ENCODE measurements at regions of chr4 and their contacts with region 1.

Region 1: GRCh38 chr4:180828440-180829018 is 1414.7 kb upstream of the TENM3 start:
- DNase-seq: peak; percentile 52
- H3K4me3 ChIP-seq: peak overlapping the region in 1 of 3 experiments; percentile 18
- H3K27ac ChIP-seq: peak overlapping the region; percentile 68
- H3K4me1 ChIP-seq: peaks cover 16% of the 10 kb centered on the region
- H3K27me3 ChIP-seq: no peaks in the 10 kb centered on the region
- CTCF ChIP-seq: peak; percentile 76 to 79

Region 2: DNA sequence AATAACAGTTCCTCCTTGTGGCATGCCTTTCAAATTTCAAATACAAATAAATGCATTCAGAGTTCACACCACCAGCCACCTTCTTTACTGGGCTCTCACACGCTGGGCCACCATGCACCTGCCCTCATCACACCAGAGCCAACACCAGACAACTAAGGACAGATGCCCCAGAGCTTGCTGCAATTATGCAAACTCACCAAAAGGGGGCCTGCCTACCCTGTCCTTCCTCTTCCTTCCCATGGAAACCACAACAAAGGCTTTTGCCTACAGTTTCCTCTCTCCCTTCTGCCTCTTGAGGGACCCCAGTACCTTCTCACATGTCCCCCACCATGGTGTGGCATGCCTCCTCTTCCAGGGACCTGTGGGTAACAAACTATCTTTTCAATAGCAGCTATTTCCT is 80.8 kb after region 1 on chr4:
- CTCF ChIA-PET with region 1: no interaction called
- dilution Hi-C with region 1: no loop called
- in situ Hi-C with region 1: no loop called
- intact Hi-C with region 1: loop called (anchors 2 kb)
- DNase-seq: peak; percentile 40
- H3K4me3 ChIP-seq: no peak overlapping the region
- H3K27ac ChIP-seq: no peak overlapping the region
- H3K4me1 ChIP-seq: peaks cover 9% of the 10 kb centered on the region
- H3K27me3 ChIP-seq: no peaks in the 10 kb centered on the region
- CTCF ChIP-seq: peak; percentile 82 to 87

Region 3: GRCh38 chr4:180947425-180947824 is 118.9 kb after region 1 on chr4:
- CTCF ChIA-PET with region 1: interaction called, 4 read pairs
- dilution Hi-C with region 1: no loop called
- in situ Hi-C with region 1: loop called (anchors 10 to 25 kb)
- intact Hi-C with region 1: loop called (anchors 1 kb)
- DNase-seq: peak; percentile 39
- H3K4me3 ChIP-seq: no peak overlapping the region
- H3K27ac ChIP-seq: no peak overlapping the region
- H3K4me1 ChIP-seq: peaks cover 22% of the 10 kb centered on the region
- H3K27me3 ChIP-seq: no peaks in the 10 kb centered on the region
- CTCF ChIP-seq: peak; percentile 42 to 57

Region 4: DNA sequence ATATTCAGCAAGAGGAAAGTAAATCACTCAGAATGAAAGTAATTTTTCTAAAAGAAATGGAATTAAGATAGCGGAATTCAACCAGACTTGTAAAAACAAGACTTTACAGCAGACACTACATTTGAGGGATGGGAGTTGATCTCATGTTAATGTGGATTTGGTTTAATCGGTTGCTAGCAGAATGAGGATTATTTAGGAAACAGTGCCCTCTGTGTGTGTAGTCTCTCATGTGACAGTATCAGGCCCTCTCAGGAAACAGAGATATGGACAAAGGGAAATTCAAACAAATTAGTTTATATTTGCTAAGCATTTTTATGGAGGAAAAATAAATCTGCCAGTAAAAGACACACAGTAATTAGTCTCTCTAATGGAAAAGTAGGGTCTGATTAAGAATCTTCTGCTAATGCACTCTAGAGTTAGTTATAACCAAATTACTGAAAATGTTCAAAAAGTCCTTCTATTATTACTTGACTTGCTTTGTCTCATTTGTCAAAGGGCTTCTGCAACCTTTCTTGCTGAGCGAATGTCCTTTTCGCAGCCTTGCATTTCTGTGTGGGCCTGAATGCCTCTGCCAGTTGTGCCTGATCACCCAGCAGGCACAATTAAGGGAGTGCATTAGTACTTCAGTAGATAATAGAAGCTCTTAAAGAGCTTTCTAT is 132.3 kb after region 1 on chr4:
- CTCF ChIA-PET with region 1: no interaction called
- dilution Hi-C with region 1: no loop called
- in situ Hi-C with region 1: loop called in 1 of 2 experiments (anchors 25 kb)
- intact Hi-C with region 1: no loop called
- DNase-seq: no peak
- H3K4me3 ChIP-seq: no peak overlapping the region
- H3K27ac ChIP-seq: no peak overlapping the region
- H3K4me1 ChIP-seq: no peaks in the 10 kb centered on the region
- H3K27me3 ChIP-seq: no peaks in the 10 kb centered on the region
- CTCF ChIP-seq: peak in 1 of 2 donors; percentile 45

Region 5: DNA sequence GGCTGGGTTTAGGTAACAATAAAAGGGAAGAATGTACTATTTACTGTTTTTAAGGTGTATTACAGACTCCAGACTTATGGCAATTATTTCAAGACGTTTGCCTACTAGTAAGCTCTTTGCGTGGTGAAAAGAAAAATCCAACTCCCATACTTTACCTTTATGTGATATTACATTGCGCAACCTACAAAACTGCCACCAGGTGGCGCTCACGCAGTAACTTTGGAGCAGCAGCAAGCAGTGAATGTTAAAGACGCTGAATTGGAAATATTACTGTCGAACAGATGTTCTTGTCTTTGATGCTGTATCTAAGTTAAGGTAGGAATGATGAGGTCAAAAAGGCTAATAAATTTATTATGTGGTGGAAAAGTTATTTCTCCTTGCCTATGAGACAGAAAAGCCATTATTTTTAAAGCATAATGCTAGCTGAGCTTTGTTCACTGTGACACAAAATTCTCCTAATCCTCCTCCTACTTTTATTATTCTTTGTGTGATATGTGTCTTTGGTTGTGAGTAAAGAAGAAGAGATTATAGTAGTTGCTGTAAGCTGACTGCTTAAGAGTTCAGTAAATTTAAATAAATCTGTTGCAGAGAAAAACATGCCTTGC is 314.8 kb after region 1 on chr4:
- CTCF ChIA-PET with region 1: no interaction called
- dilution Hi-C with region 1: no loop called
- in situ Hi-C with region 1: loop called in 1 of 2 experiments (anchors 25 kb)
- intact Hi-C with region 1: loop called (anchors 2 kb)
- DNase-seq: peak; percentile 50
- H3K4me3 ChIP-seq: no peak overlapping the region
- H3K27ac ChIP-seq: no peak overlapping the region
- H3K4me1 ChIP-seq: no peaks in the 10 kb centered on the region
- H3K27me3 ChIP-seq: no peaks in the 10 kb centered on the region
- CTCF ChIP-seq: peak; percentile 75 to 81

Region 6: GRCh38 chr4:181528570-181529184 is 700.1 kb after region 1 on chr4:
- CTCF ChIA-PET with region 1: no interaction called
- dilution Hi-C with region 1: no loop called
- in situ Hi-C with region 1: loop called in 1 of 2 experiments (anchors 25 kb)
- intact Hi-C with region 1: no loop called
- DNase-seq: peak; percentile 43
- H3K4me3 ChIP-seq: no peak overlapping the region
- H3K27ac ChIP-seq: no peak overlapping the region
- H3K4me1 ChIP-seq: no peaks in the 10 kb centered on the region
- H3K27me3 ChIP-seq: peaks cover 3% of the 10 kb centered on the region
- CTCF ChIP-seq: peak; percentile 95 to 99

Measured in mammary epithelial cell (primary cell).